Mammary epithelial cell (primary cell): ENCODE measurements at regions of chr3 and their contacts with region 1.

Region 1: GRCh38 chr3:143644370-143645089 is 203.7 kb downstream of the SLC9A9 start:
- DNase-seq: peak; percentile 64
- H3K4me3 ChIP-seq: no peak overlapping the region
- H3K27ac ChIP-seq: no peak overlapping the region
- H3K4me1 ChIP-seq: no peaks in the 10 kb centered on the region
- H3K27me3 ChIP-seq: no peaks in the 10 kb centered on the region
- CTCF ChIP-seq: peak; percentile 51 to 76

Region 2: DNA sequence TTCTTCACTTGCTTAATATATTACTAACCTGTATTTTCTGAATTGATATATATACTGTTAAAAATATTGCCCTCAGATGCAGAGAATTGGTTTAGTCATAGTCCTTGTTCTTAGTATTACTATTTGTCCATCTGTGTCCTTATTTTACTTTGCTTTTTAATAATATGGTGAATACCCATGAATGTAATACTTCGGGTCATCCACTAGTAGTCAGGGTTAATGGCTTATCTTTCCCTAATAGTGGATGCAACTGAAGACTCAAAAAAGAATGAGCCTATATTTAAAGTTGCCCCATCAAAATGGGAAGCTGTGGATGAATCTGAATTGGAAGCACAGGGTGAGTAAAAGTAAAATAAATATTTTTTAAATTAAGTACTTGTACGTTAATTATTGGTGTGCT is 606.7 kb before region 1 on chr3:
- CTCF ChIA-PET with region 1: no interaction called
- dilution Hi-C with region 1: no loop called
- in situ Hi-C with region 1: loop called in 1 of 2 experiments (anchors 10 kb)
- intact Hi-C with region 1: no loop called
- DNase-seq: no peak
- H3K4me3 ChIP-seq: no peak overlapping the region
- H3K27ac ChIP-seq: no peak overlapping the region
- H3K4me1 ChIP-seq: no peaks in the 10 kb centered on the region
- H3K27me3 ChIP-seq: no peaks in the 10 kb centered on the region
- CTCF ChIP-seq: peak; percentile 2 to 7

Region 3: GRCh38 chr3:143119009-143119914 is 525.3 kb before region 1 on chr3 and contains the start of gene CHST2:
- CTCF ChIA-PET with region 1: no interaction called
- dilution Hi-C with region 1: no loop called
- in situ Hi-C with region 1: no loop called
- intact Hi-C with region 1: loop called (anchors 1 kb)
- DNase-seq: peak; percentile 81
- H3K4me3 ChIP-seq: peak within 1 kb of the TSS; percentile 78 to 81 (median 80)
- H3K27ac ChIP-seq: no peak within 1 kb of the TSS
- H3K4me1 ChIP-seq: peaks cover 11% of the 10 kb centered on the region
- H3K27me3 ChIP-seq: no peaks in the 10 kb centered on the region
- CTCF ChIP-seq: no peak
- total RNA-seq, gene CHST2: 12.4 to 17.0 TPM

Region 4: GRCh38 chr3:143302638-143303171 is 341.8 kb before region 1 on chr3:
- CTCF ChIA-PET with region 1: no interaction called
- dilution Hi-C with region 1: no loop called
- in situ Hi-C with region 1: no loop called
- intact Hi-C with region 1: loop called (anchors 10 kb)
- DNase-seq: peak; percentile 80
- H3K4me3 ChIP-seq: no peak overlapping the region
- H3K27ac ChIP-seq: no peak overlapping the region
- H3K4me1 ChIP-seq: peaks cover 25% of the 10 kb centered on the region
- H3K27me3 ChIP-seq: no peaks in the 10 kb centered on the region
- CTCF ChIP-seq: peak in 1 of 2 donors; percentile 7

Region 5: GRCh38 chr3:143433787-143434378 is 210.6 kb before region 1 on chr3:
- CTCF ChIA-PET with region 1: no interaction called
- dilution Hi-C with region 1: no loop called
- in situ Hi-C with region 1: loop called in 1 of 2 experiments (anchors 10 kb)
- intact Hi-C with region 1: loop called (anchors 1 kb)
- DNase-seq: no peak
- H3K4me3 ChIP-seq: no peak overlapping the region
- H3K27ac ChIP-seq: no peak overlapping the region
- H3K4me1 ChIP-seq: no peaks in the 10 kb centered on the region
- H3K27me3 ChIP-seq: no peaks in the 10 kb centered on the region
- CTCF ChIP-seq: peak; percentile 59 to 61

Region 6: GRCh38 chr3:143763564-143764162 is 119.1 kb after region 1 on chr3:
- CTCF ChIA-PET with region 1: no interaction called
- dilution Hi-C with region 1: no loop called
- in situ Hi-C with region 1: no loop called
- intact Hi-C with region 1: loop called (anchors 1 kb)
- DNase-seq: no peak
- H3K4me3 ChIP-seq: no peak overlapping the region
- H3K27ac ChIP-seq: no peak overlapping the region
- H3K4me1 ChIP-seq: no peaks in the 10 kb centered on the region
- H3K27me3 ChIP-seq: no peaks in the 10 kb centered on the region
- CTCF ChIP-seq: peak; percentile 54 to 59

Region 7: DNA sequence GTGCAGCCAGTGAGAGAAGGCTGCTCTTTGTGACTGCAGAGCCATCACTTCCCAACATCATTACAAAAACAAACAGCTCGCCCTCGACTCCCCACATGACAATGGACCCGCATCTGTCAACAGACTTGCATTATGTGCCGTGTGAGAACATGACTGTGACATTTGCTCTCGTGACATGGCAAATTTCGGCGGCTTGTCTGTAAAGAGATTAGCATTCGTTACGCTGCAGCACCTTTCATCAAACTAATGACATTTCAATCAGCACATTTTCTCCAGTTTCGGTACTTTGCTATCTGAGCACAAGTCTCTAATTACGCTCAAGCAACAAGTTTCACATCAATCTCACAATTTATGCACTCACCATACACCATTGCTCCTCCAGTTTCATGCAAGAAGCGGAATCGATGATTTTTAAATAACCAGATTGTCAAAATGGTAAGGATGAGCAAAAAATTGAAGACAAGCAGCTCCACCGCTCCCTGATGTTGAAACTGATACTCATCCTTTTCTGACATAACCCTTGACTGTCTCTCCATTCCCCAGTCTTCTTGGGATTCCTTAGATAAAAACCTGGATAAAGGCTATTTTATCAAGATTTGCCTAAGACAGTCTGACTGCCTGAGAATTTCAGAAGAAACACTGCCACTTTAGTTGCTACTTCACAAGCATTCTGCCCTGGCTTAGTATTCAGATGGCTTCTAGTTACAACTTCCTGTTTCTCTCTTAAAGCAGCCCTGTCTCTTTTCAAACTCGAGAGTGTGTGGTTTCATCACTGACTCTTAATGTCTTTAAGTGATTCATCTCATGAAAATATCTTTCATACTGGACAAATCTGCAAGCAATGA is 203.5 kb after region 1 on chr3 and contains the start of gene SLC9A9:
- CTCF ChIA-PET with region 1: no interaction called
- dilution Hi-C with region 1: no loop called
- in situ Hi-C with region 1: no loop called
- intact Hi-C with region 1: no loop called
- DNase-seq: peak; percentile 78
- H3K4me3 ChIP-seq: peak within 1 kb of the TSS; percentile 52 to 81 (median 57)
- H3K27ac ChIP-seq: peak within 1 kb of the TSS; percentile 70
- H3K4me1 ChIP-seq: peaks cover 33% of the 10 kb centered on the region
- H3K27me3 ChIP-seq: no peaks in the 10 kb centered on the region
- CTCF ChIP-seq: no peak
- total RNA-seq, gene SLC9A9: 4.3 to 7.8 TPM